OCI-LY7 (cell line): ENCODE measurements at regions of chr12 and their contacts with region 1.

Region 1: GRCh38 chr12:85424581-85425348 is 144.7 kb downstream of the ALX1 start:
- DNase-seq: peak; percentile 70
- H3K4me3 ChIP-seq: peak overlapping the region; percentile 59
- H3K27ac ChIP-seq: peak overlapping the region; percentile 77
- H3K4me1 ChIP-seq: peaks cover 28% of the 10 kb centered on the region
- CTCF ChIP-seq: peak; percentile 96

Region 2: GRCh38 chr12:84450475-84450874 is 974.3 kb before region 1 on chr12:
- CTCF ChIA-PET with region 1: no interaction called
- POLR2A ChIA-PET with region 1: no interaction called
- intact Hi-C with region 1: no loop called
- DNase-seq: no peak
- H3K4me3 ChIP-seq: no peak overlapping the region
- H3K27ac ChIP-seq: no peak overlapping the region
- H3K4me1 ChIP-seq: no peaks in the 10 kb centered on the region
- CTCF ChIP-seq: no peak

Region 3: GRCh38 chr12:85076688-85077430 is 347.9 kb before region 1 on chr12:
- CTCF ChIA-PET with region 1: no interaction called
- POLR2A ChIA-PET with region 1: no interaction called
- intact Hi-C with region 1: loop called (anchors 10 kb)
- DNase-seq: peak; percentile 45
- H3K4me3 ChIP-seq: no peak overlapping the region
- H3K27ac ChIP-seq: no peak overlapping the region
- H3K4me1 ChIP-seq: no peaks in the 10 kb centered on the region
- CTCF ChIP-seq: peak; percentile 80

Region 4: DNA sequence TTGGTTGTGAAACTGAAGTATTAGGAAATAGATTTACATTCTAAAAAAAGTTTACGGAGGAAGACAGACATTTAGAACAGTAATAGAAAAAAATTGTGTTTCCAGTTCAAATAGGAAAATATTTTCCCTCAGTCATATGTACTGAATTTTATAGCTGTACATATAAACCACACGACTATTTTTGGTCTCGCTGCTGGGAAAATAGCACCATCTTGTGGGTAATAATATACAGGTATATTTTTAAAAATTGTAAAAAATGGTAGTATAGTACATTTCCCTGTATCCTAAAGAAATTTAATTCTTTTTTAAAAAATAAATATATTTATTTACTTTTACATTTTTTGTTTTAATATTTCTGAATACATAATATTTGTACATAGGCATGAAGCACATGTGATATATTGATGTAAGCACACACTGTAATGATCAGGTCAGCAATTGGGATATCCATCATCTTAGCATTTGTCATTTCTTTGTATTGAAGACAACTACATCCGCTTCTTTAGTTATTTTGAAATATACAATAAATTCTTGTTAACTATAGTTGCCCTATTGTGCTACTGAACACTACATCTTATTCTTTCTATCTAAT is 23.9 kb after region 1 on chr12:
- CTCF ChIA-PET with region 1: interaction called, 6 read pairs
- POLR2A ChIA-PET with region 1: interaction called, 6 read pairs
- intact Hi-C with region 1: loop called (anchors 1 kb)
- DNase-seq: peak; percentile 33
- H3K4me3 ChIP-seq: no peak overlapping the region
- H3K27ac ChIP-seq: no peak overlapping the region
- H3K4me1 ChIP-seq: no peaks in the 10 kb centered on the region
- CTCF ChIP-seq: peak; percentile 73

Region 5: DNA sequence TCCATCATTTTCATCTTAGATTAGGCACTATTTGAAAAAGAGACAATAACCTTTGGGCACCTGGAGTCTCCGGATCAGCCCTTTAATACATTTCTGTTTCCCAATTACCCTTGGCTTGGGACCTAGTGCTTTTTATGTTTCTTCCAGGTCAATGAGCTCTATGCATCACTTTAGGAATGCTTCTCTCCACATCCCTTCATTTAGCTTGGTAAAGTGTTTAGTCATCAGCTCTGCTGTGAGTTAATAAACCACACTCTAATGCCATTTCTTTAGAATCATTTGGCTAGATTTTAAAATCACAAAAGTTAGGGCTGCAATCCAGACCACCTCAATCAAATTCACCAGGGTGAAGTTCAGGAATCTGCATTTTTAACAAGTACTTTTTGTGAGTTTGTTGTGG is 369.8 kb after region 1 on chr12:
- CTCF ChIA-PET with region 1: no interaction called
- POLR2A ChIA-PET with region 1: no interaction called
- intact Hi-C with region 1: no loop called
- DNase-seq: no peak
- H3K4me3 ChIP-seq: no peak overlapping the region
- H3K27ac ChIP-seq: no peak overlapping the region
- H3K4me1 ChIP-seq: no peaks in the 10 kb centered on the region
- CTCF ChIP-seq: no peak

Region 6: DNA sequence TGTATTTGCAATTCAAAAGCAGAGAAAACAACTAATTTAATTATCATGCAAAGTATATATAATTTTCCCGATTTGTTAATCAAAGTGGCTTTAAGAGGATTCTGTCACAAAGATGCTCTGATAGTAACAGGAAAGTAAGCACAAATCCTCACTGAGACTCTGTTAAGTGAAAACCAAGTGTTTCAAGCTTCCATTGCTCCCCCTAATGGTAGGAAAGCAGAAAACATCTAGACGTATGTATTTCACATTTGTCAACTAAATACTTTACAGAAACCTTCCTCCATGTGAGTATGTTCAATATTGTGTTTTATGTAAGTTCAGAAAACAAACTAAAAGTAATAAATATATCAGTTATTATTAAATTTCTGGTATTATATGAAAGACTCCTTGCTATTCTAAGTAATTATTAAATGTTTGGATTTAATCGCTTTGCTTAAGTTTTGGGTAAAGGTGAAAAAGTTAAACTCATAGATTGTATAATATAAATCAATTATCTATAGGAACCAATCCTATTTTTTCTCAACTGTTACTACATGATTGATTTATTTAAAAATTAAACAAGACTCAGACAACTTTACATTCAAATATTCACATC is 447.8 kb after region 1 on chr12:
- CTCF ChIA-PET with region 1: interaction called, 4 read pairs
- POLR2A ChIA-PET with region 1: interaction called, 4 read pairs
- intact Hi-C with region 1: loop called (anchors 2 kb)
- DNase-seq: peak; percentile 67
- H3K4me3 ChIP-seq: no peak overlapping the region
- H3K27ac ChIP-seq: no peak overlapping the region
- H3K4me1 ChIP-seq: no peaks in the 10 kb centered on the region
- CTCF ChIP-seq: peak; percentile 88